GM13977 (cell line): ENCODE measurements at regions of chrX and their contacts with region 1.

Region 1: GRCh38 chrX:19904778-19905367 is 17.5 kb upstream of the SH3KBP1 start:
- DNase-seq: peak; percentile 71
- CTCF ChIP-seq: peak; percentile 68

Region 2: DNA sequence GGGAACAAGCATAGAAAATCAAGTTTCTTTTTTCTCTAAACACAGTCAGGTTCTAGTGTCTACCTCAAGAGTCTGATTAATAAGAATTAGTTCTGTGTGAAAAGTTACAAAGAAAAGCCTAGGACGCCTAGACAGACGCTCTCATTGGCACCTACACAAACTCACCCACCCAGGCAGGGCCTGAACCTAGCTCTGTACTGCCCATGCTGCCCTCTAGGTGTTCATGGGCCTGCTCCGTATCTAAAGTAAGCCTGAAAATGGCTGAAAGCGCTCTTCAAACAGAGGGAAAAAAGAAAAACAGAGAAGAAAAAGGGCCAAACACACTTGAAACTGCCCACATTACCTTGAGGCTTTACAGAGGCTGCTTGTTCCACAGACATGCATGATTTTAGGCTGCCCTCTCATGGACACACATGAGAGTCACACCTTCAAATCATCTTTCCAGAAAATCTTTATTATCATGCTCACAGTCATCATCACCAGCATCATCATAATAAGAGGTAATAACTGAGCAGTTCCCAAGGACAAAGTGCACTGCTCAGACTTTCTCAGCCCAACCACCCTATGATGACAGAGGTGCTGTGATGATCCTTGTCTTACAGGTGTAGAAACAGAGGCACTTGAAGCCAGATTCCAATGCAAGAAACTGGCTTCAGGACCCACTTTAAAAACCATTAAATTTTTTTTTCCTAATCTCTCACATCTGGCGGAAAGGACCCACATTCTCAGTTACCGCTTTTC is 162.3 kb after region 1 on chrX:
- in situ Hi-C with region 1: loop called (anchors 25 kb)
- DNase-seq: peak; percentile 64
- CTCF ChIP-seq: peak; percentile 63